GM12878 (cell line): ENCODE measurements at regions of chr3 and their contacts with region 1.

Region 1: DNA sequence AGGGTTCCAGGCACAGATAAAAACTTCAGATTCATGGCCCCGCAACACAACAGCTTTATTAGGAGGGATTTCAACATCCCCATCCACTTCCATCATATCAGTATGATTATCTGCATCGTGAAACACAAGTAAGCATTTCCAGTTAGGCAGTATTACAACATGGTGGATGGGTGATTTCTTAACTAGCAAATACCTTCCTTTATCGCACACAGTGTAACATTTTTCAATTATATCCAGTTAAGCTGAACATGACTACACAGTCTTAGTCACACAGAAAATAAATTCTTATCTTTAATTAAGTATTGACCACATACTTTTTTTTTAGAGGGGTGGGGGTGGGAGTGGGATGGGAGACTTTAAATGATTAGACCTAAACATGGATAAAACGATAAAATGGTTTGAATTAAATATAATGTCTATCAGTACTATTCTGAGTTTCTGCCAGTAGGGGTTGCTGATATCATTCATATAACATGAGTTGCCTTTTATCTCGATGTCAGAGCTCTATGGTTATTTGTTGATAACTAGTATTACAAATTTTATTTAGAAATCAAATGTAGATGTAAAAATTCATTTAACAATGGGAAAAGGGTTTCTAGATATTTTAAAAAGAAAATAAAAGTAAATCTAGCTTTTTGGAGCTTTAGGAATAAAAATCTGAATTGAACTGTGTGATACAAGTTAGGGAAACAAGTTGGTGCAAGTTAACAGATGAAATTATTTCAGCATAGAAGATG is 146.6 kb downstream of the TBL1XR1 start:
- DNase-seq: no peak
- ATAC-seq: peak; percentile 75
- H3K4me3 ChIP-seq: no peak overlapping the region
- H3K27ac ChIP-seq: no peak overlapping the region
- H3K4me1 ChIP-seq: no peaks in the 10 kb centered on the region
- H3K27me3 ChIP-seq: no peaks in the 10 kb centered on the region
- CTCF ChIP-seq: peak; percentile 22 to 65 (median 38); a peak in 4 of 6 replicates
- EP300 ChIP-seq: no peak
- POLR2A ChIP-seq: no peak
- RAD21 ChIP-seq: peak; percentile 73

Region 2: DNA sequence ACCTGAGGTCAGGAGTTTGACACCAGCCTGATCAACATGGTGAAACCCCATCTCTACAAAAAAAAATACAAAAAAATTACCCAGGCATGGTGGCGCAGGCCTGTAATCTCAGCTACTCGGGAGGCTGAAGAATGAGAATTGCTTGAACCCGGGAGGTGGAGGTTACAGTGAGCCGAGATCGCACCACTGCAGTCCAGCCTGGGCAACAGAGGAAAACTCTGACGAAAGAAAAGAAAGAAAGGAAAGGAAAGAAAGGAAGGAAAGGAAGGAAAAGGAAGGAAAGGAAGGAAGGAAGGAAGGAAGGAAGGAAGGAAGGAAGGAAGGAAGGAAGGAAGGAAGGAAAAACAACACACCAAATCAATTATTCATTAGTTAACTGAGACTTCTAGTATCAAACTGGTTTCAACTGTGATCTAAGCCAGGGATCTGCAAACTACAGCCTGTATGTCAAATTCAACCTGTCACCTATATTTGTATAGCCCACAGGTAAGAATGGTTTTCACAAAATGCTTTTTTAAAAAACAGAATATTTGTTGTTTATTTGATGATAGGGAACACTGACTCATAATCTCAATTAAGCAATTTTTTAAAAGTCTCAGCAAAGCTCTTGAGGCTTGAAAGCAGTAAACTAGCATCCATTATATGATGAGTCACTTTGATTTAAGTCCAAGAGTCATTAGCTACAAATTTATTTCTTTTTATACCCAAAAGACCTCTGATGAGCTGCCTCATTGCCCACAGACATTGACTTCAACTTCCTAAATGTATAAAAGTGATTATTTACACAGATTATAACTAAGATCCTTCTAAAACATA is 19.1 kb after region 1 on chr3:
- CTCF ChIA-PET with region 1: interaction called, 5 read pairs
- POLR2A ChIA-PET with region 1: no interaction called
- RAD21 ChIA-PET with region 1: no interaction called
- SMC1A ChIA-PET with region 1: interaction called, 11 read pairs
- in situ Hi-C with region 1: no loop called
- intact Hi-C with region 1: no loop called
- DNase-seq: no peak
- ATAC-seq: no peak
- H3K4me3 ChIP-seq: no peak overlapping the region
- H3K27ac ChIP-seq: no peak overlapping the region
- H3K4me1 ChIP-seq: no peaks in the 10 kb centered on the region
- H3K27me3 ChIP-seq: no peaks in the 10 kb centered on the region
- CTCF ChIP-seq: no peak
- EP300 ChIP-seq: no peak
- POLR2A ChIP-seq: no peak
- RAD21 ChIP-seq: no peak

Region 3: GRCh38 chr3:177126015-177126773 is 75.5 kb after region 1 on chr3:
- CTCF ChIA-PET with region 1: no interaction called
- POLR2A ChIA-PET with region 1: no interaction called
- RAD21 ChIA-PET with region 1: no interaction called
- SMC1A ChIA-PET with region 1: no interaction called
- in situ Hi-C with region 1: no loop called
- intact Hi-C with region 1: no loop called
- DNase-seq: no peak
- ATAC-seq: no peak
- H3K4me3 ChIP-seq: no peak overlapping the region
- H3K27ac ChIP-seq: no peak overlapping the region
- H3K4me1 ChIP-seq: no peaks in the 10 kb centered on the region
- H3K27me3 ChIP-seq: no peaks in the 10 kb centered on the region
- CTCF ChIP-seq: no peak
- EP300 ChIP-seq: no peak
- POLR2A ChIP-seq: no peak
- RAD21 ChIP-seq: no peak

Region 4: GRCh38 chr3:177679568-177680441 is 629.1 kb after region 1 on chr3:
- CTCF ChIA-PET with region 1: no interaction called
- POLR2A ChIA-PET with region 1: no interaction called
- RAD21 ChIA-PET with region 1: no interaction called
- SMC1A ChIA-PET with region 1: interaction called, 3 read pairs
- in situ Hi-C with region 1: no loop called
- intact Hi-C with region 1: loop called (anchors 10 kb)
- DNase-seq: no peak
- ATAC-seq: peak; percentile 87
- H3K4me3 ChIP-seq: no peak overlapping the region
- H3K27ac ChIP-seq: no peak overlapping the region
- H3K4me1 ChIP-seq: no peaks in the 10 kb centered on the region
- H3K27me3 ChIP-seq: no peaks in the 10 kb centered on the region
- CTCF ChIP-seq: no peak
- EP300 ChIP-seq: no peak
- POLR2A ChIP-seq: no peak
- RAD21 ChIP-seq: no peak

Region 5: GRCh38 chr3:177777699-177778098 is 727.0 kb after region 1 on chr3:
- CTCF ChIA-PET with region 1: interaction called, 31 read pairs
- POLR2A ChIA-PET with region 1: no interaction called
- RAD21 ChIA-PET with region 1: interaction called, 6 read pairs
- SMC1A ChIA-PET with region 1: interaction called, 9 read pairs
- in situ Hi-C with region 1: loop called (anchors 5 kb)
- intact Hi-C with region 1: loop called (anchors 1 kb)
- DNase-seq: peak; percentile 20
- ATAC-seq: peak; percentile 97
- H3K4me3 ChIP-seq: no peak overlapping the region
- H3K27ac ChIP-seq: no peak overlapping the region
- H3K4me1 ChIP-seq: no peaks in the 10 kb centered on the region; the same call in 1 of the 2 replicates
- H3K27me3 ChIP-seq: no peaks in the 10 kb centered on the region
- CTCF ChIP-seq: peak; percentile 74 to 80 (median 78)
- EP300 ChIP-seq: no peak
- POLR2A ChIP-seq: no peak
- RAD21 ChIP-seq: peak; percentile 87